ENCODE measurements at regions of chr6 and their contacts with region 1.

Region 1: GRCh38 chr6:134640975-134641429 is 308.9 kb downstream of the ALDH8A1 start:
- H3K4me3 ChIP-seq: no peak overlapping the region
- H3K27ac ChIP-seq: no peak overlapping the region
- H3K4me1 ChIP-seq: no peaks in the 10 kb centered on the region
- CTCF ChIP-seq: peak; percentile 68

Region 2: DNA sequence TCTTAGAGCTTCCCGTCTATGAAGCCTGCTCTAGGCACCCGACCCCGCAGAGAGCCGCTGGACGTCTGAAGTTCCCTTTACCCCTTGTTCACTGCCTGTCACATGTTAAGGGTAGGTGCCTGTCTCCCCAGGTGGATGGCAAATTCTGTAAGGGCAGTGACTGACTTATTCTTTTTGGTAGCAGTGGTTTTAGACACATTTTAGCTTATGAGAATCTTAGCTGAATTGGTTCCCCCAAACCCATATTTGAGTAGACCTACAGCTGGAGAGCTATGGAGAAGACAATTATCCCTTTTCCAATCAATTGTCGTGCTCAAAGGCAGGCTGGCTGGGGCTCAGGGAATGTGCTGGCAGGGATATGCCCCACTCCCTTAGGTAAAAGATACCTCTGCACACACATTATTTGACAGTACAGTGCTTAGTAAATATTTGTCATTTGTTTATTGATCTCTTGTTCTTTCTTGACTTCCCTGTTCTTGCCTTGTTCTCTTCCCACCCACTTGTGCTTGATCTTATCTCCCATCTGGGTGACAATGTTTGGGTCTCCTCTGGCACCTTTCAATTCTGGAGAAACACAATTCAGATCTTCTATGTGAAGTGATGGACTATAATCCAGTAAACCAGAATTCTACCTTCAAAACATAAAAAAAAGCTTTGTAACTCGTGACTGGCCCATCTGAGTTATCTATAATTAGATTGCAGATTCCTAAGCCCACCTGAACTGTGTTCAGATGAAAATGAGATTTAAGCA is 474.3 kb before region 1 on chr6:
- CTCF ChIA-PET with region 1: interaction called, 14 read pairs
- POLR2A ChIA-PET with region 1: no interaction called
- H3K4me3 ChIP-seq: no peak overlapping the region
- H3K27ac ChIP-seq: no peak overlapping the region
- H3K4me1 ChIP-seq: no peaks in the 10 kb centered on the region
- CTCF ChIP-seq: no peak

Region 3: DNA sequence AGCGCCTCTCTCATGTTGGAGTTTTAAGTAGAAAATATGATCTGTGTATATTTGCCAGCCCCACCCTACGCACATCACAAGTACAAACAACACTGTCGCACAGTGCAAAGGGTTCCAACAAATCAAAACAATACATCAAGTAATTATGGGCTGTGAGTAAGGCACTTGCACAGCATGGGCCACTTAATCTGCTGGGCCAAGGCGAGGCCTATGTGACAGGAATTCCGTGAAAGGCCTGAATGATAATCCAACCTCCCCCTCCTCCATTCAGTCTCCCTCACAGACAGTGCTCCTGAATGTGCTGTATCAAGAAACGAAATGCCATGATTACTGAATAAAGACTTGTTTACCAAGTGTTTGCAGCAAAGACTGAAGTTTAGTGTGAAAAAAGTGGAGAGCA is 458.5 kb before region 1 on chr6:
- CTCF ChIA-PET with region 1: interaction called, 47 read pairs
- POLR2A ChIA-PET with region 1: no interaction called
- H3K4me3 ChIP-seq: no peak overlapping the region
- H3K27ac ChIP-seq: no peak overlapping the region
- H3K4me1 ChIP-seq: peaks cover 4% of the 10 kb centered on the region; the same call in 1 of the 2 replicates
- CTCF ChIP-seq: no peak

Region 4: DNA sequence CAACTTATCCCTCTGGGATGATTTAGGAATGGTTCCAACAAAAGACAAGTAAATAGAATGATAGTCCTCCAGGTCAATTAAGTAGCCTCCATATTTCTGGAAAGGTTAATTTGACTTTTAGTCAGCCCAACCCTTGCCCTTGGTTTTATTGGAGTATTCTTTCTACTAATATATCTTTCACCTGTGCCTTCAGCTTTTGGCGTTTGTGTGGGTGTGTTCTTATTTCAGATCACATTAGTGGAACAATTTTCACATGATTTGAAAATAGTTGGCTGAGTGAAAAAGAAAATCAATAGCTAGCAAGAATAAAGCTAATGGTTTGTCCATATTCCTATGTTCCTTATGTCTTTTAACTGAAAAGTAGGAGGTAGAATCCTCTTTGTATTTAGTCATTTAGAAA is 83.5 kb before region 1 on chr6:
- CTCF ChIA-PET with region 1: interaction called, 11 read pairs
- POLR2A ChIA-PET with region 1: no interaction called
- H3K4me3 ChIP-seq: no peak overlapping the region
- H3K27ac ChIP-seq: no peak overlapping the region
- H3K4me1 ChIP-seq: no peaks in the 10 kb centered on the region
- CTCF ChIP-seq: no peak

Region 5: DNA sequence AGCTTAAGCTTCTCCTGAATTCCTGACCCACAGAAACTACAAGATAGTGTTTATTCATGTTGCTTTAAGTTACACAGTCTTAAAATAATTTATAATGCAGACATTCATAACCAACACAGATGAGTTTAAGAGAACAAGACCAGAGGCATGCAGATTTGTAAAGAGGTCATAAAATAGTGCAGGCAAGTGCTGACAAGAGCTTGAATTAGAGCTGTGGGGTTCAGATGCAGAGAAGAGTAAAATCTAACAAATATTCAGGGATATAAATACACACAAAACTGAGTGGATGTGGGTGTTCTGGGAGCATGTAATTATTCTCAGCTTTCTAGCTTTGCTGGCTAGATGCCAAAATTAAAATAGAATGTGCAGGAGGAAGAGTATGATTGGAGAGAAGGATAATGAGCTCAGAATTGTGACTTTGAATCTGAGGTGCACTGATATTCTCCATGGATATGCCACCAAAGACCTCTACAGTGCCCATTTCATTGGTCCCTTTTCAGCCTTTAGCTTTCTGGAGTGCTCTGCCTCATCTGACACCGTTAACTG is 31.2 kb before region 1 on chr6:
- CTCF ChIA-PET with region 1: no interaction called
- POLR2A ChIA-PET with region 1: no interaction called
- H3K4me3 ChIP-seq: no peak overlapping the region
- H3K27ac ChIP-seq: no peak overlapping the region
- H3K4me1 ChIP-seq: 0 out of 2 replicates have a peak, but pooled peaks cover 2% of the 10 kb centered on the region
- CTCF ChIP-seq: no peak

Region 6: DNA sequence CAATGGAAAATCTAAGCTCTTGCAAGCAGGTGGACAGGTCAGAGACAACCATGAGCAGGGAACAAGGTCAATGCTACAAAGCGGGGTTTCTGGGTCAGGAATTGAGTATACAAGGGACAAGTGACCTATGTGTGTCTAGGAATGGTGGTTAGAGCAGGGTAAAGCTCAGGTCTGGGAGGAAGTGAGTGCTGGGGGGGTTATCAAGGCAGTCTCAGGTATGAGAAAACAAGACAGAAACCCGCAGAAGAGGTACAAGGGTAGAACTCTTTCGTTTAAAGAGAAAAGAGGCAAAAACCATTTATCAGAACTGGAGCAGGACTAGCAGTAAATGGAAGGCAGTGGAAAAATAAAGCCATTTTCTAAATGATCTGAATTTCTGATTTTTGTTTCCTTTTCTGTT is 10.5 kb after region 1 on chr6:
- CTCF ChIA-PET with region 1: interaction called, 13 read pairs
- POLR2A ChIA-PET with region 1: no interaction called
- H3K4me3 ChIP-seq: no peak overlapping the region
- H3K27ac ChIP-seq: no peak overlapping the region
- H3K4me1 ChIP-seq: no peaks in the 10 kb centered on the region
- CTCF ChIP-seq: no peak

Region 7: DNA sequence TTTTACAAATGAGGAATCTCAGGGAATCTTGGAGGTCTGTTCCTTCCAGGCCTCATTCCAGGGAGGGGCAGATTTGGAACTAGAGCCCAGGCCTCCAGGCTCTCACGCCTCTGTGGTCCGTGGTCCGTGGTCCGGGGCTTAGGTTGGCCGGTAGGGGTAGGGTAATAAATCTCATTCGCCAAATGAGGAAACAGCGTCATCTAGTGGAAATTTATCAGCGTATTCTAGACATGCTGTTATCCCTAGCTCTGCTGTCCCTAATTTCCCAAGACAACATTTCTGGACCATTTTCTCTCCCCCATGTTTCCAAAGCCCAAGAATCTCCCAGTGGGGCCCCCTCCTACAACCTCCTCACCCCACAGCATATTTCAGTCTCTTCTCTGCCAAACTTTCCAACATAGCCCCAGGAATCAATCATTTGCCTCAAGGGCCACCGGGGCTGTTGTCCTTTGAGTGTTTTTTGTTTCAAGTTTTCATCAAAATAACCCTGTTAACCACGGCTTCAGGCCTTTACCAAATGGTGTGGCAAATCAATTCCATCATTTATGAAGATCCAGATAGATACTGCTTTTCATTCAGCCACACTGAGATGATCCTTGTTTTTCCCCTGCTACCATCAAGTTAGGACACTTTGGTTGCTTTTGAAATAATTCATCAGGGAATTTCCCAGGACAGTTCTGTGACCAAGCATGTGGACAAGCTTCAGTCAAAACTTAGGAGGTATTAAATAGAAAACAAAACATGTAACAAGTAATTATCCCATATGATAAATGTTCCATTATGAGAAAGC is 182.1 kb after region 1 on chr6:
- CTCF ChIA-PET with region 1: interaction called, 54 read pairs
- POLR2A ChIA-PET with region 1: no interaction called
- H3K4me3 ChIP-seq: no peak overlapping the region
- H3K27ac ChIP-seq: no peak overlapping the region
- H3K4me1 ChIP-seq: no peaks in the 10 kb centered on the region; the same call in 1 of the 2 replicates
- CTCF ChIP-seq: peak; percentile 95

Measured in HEK293 (cell line).